Left ventricle myocardium inferior (tissue), 1 donor: ENCODE measurements at regions of chr2 and their contacts with region 1.

Region 1: GRCh38 chr2:54330162-54330925 is 74.3 kb upstream of the TSPYL6 start:
- DNase-seq: peak; percentile 96
- H3K4me3 ChIP-seq: peak overlapping the region; percentile 70
- H3K27ac ChIP-seq: peak overlapping the region; percentile 95
- H3K4me1 ChIP-seq: peaks cover 30% of the 10 kb centered on the region
- H3K27me3 ChIP-seq: no peaks in the 10 kb centered on the region
- CTCF ChIP-seq: no peak

Region 2: DNA sequence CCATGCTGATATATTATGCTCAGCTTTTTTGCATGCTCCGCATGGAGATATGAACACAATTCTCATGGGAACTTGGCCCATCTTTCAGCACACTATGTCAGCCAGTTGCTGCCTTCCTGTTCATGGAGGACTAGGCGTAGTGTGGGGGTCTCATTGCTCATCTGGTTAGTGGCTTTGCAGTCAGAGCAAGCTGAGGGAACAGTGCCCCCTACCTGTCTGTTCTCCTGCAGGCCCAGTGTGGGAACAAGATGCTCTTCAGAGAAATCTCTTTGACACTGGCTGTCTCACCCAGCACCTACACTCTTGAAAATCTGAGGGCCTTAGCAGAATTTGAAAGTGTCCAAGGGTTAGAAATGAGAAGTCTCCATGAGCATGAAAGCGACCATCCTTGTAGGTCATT is 172.8 kb after region 1 on chr2:
- intact Hi-C with region 1: loop called (anchors 10 kb)
- DNase-seq: no peak
- H3K4me3 ChIP-seq: no peak overlapping the region
- H3K27ac ChIP-seq: peak overlapping the region; percentile 71
- H3K4me1 ChIP-seq: peaks cover 100% of the 10 kb centered on the region
- H3K27me3 ChIP-seq: no peaks in the 10 kb centered on the region
- CTCF ChIP-seq: peak; percentile 57